Heart right ventricle (tissue), 16 donors: ENCODE measurements at regions of chr10 and their contacts with region 1.

Region 1: DNA sequence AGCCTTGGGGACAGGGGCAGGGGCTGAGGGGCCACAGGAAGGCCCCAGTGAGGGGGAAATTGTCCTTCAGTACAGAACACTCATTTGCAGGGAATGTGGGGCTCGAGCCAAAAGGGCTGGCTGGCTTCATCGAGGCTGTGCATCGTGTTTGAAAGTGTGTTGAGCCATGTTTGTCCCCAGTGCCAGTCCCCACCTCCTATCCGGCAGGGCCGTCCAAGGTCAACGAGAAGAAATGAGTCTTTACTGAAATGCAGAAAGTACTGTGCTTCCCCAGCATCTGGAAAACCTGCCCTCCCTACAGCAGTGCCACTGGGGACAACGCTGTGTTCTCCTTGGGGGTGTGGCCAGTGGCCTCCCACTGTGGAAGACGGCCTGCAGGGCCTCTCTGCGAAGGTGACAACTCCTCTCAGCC is 214.1 kb downstream of the KLF6 start:
- DNase-seq: peak; percentile 27 to 56
- ATAC-seq: peak; percentile 33 to 80 (median 58)
- H3K4me3 ChIP-seq: no peak overlapping the region
- H3K27ac ChIP-seq: peak overlapping the region in 9 of 10 donors; percentile 1 to 68 (median 46)
- H3K4me1 ChIP-seq: peaks cover 6 to 52% (median 32%) of the 10 kb centered on the region in 9 donors
- H3K27me3 ChIP-seq: no peaks in the 10 kb centered on the region
- CTCF ChIP-seq: no peak

Region 2: GRCh38 chr10:3025300-3025699 is 545.6 kb before region 1 on chr10:
- intact Hi-C with region 1: no loop called
- DNase-seq: no peak
- ATAC-seq: no peak
- H3K4me3 ChIP-seq: no peak overlapping the region
- H3K27ac ChIP-seq: no peak overlapping the region
- H3K4me1 ChIP-seq: no peaks in the 10 kb centered on the region
- H3K27me3 ChIP-seq: peaks cover 0 to 16% (median 10%) of the 10 kb centered on the region in 7 donors
- CTCF ChIP-seq: no peak

Region 3: DNA sequence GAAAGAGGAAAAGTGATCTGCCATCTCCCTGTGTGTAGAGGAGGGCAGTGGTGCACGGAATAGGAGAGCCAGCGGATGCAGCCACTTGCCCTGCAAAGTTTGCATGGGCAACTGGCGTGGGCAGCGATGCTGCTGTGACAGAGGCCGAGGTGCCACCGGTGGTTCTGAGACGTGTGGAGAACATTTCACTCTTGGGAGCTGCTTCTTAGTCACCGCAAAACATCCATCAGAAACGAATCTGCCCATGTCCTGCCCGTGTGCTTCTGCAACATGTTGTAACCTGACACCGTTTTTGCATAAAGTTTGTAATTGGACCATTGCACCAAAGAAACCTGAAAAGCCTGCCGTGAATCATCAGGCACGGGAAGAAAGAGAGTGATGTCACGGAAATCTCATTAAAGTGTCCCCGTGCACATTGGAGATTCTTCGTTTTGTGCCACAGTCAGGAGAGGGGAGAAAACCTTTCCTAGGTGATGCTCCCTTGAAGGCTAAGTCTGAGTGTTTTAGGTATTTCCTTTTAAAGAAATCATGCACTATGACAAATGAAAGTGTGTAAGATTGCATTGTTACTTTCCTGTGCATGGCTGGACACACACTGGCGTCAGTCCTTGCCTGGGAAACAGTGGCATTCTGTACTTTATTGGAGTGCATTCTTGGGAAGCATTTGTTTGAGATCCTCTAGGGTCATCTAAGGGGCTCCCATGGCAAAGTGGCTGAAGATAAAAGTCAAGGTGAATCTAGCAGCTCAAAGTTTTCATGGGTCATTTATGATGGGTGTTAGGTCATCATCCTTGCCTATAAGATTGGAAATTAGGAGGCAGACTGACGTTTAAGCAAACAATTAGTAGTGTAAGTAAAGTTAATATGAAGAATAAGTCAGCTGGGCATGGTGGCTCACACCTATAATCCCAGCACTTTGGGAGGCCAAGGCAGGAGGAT is 88.4 kb before region 1 on chr10:
- intact Hi-C with region 1: loop called in 1 of 10 experiments (anchors 10 kb)
- DNase-seq: peak in 1 of 2 donors; percentile 39
- ATAC-seq: peak; percentile 68 to 84 (median 77)
- H3K4me3 ChIP-seq: peak overlapping the region in 5 of 10 donors; percentile 0 to 34 (median 23)
- H3K27ac ChIP-seq: peak overlapping the region in 5 of 10 donors; percentile 9 to 47 (median 29)
- H3K4me1 ChIP-seq: peaks cover 10 to 35% (median 27%) of the 10 kb centered on the region in 9 donors
- H3K27me3 ChIP-seq: no peaks in the 10 kb centered on the region
- CTCF ChIP-seq: no peak

Region 4: GRCh38 chr10:3500408-3500856 is 70.4 kb before region 1 on chr10:
- intact Hi-C with region 1: loop called in 1 of 10 experiments (anchors 5 kb)
- DNase-seq: peak; percentile 58 to 73
- ATAC-seq: peak; percentile 79 to 97 (median 88)
- H3K4me3 ChIP-seq: no peak overlapping the region
- H3K27ac ChIP-seq: peak overlapping the region in 8 of 10 donors; percentile 13 to 61 (median 48)
- H3K4me1 ChIP-seq: peaks cover 0 to 30% (median 4%) of the 10 kb centered on the region in 9 donors
- H3K27me3 ChIP-seq: no peaks in the 10 kb centered on the region
- CTCF ChIP-seq: no peak

Region 5: DNA sequence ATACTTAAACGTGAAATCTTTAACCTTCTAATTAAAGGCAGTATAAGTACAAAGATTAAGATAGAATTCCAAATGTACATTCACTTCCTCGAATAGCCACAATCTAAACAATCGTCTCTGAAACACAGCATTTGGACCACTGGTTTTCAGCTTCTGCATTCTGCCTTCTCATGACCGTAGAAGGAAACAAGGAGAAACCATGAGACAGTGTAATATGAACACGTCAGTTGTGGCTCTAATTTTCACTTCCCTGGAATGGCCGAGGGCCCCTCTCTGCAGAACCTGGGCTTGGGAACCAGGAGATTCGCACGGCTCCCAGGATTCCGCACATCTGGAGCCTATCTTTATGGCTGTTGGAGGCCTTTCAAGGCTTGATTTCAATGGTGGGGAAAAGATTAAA is 24.9 kb after region 1 on chr10:
- intact Hi-C with region 1: no loop called
- DNase-seq: no peak
- ATAC-seq: no peak
- H3K4me3 ChIP-seq: no peak overlapping the region
- H3K27ac ChIP-seq: no peak overlapping the region
- H3K4me1 ChIP-seq: no peaks in the 10 kb centered on the region
- H3K27me3 ChIP-seq: peaks cover 0 to 4% (median 0%) of the 10 kb centered on the region in 7 donors
- CTCF ChIP-seq: no peak